IMR-90 (cell line): ENCODE measurements at regions of chr9 and their contacts with region 1.

Region 1: GRCh38 chr9:13033959-13034693 is 245.4 kb downstream of the MPDZ start:
- DNase-seq: peak; percentile 54
- ATAC-seq: peak; percentile 99
- H3K4me3 ChIP-seq: no peak overlapping the region
- H3K27ac ChIP-seq: no peak overlapping the region
- H3K4me1 ChIP-seq: no peaks in the 10 kb centered on the region
- H3K27me3 ChIP-seq: peaks cover 3% of the 10 kb centered on the region; the same call in 1 of the 2 replicates
- CTCF ChIP-seq: peak; percentile 87
- POLR2A ChIP-seq: no peak
- RAD21 ChIP-seq: peak; percentile 91

Region 2: GRCh38 chr9:12775679-12776512 is 258.2 kb before region 1 on chr9:
- CTCF ChIA-PET with region 1: no interaction called
- POLR2A ChIA-PET with region 1: no interaction called
- dilution Hi-C with region 1: no loop called
- in situ Hi-C with region 1: no loop called
- intact Hi-C with region 1: loop called (anchors 5 kb)
- DNase-seq: peak; percentile 89
- ATAC-seq: peak; percentile 84
- H3K4me3 ChIP-seq: peak overlapping the region; percentile 91
- H3K27ac ChIP-seq: peak overlapping the region; percentile 96
- H3K4me1 ChIP-seq: peaks cover 5% of the 10 kb centered on the region
- H3K27me3 ChIP-seq: no peaks in the 10 kb centered on the region
- CTCF ChIP-seq: peak; percentile 53
- POLR2A ChIP-seq: peak; percentile 45; the same call in 1 of the 2 replicates
- RAD21 ChIP-seq: peak; percentile 64; the same call in 1 of the 2 replicates

Region 3: GRCh38 chr9:13088720-13089427 is 54.7 kb after region 1 on chr9:
- CTCF ChIA-PET with region 1: interaction called, 5 read pairs
- POLR2A ChIA-PET with region 1: no interaction called
- dilution Hi-C with region 1: no loop called
- in situ Hi-C with region 1: no loop called
- intact Hi-C with region 1: loop called (anchors 2 kb)
- DNase-seq: peak; percentile 57
- ATAC-seq: peak; percentile 85
- H3K4me3 ChIP-seq: peak overlapping the region; percentile 38; the same call in 1 of the 2 replicates
- H3K27ac ChIP-seq: no peak overlapping the region
- H3K4me1 ChIP-seq: no peaks in the 10 kb centered on the region
- H3K27me3 ChIP-seq: no peaks in the 10 kb centered on the region
- CTCF ChIP-seq: peak; percentile 67
- POLR2A ChIP-seq: no peak
- RAD21 ChIP-seq: peak; percentile 66

Region 4: DNA sequence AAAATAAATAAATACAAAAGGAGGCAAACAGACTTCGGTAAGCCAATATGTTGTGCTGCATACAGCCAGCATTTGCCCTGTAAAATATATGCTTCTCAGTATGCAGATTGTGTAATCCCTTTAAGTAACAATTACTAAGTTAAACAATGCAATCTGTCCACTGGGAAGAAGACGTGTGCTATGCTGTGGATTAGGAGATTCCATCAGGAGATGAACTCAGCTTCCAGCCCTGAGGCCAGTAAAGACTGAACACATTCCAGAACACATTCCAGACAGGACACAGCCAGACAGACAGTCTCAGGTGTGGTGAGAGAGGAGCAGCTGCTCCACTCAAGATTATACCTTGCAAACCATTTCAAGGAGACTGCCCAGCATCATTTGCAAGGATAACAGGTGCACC is 147.5 kb after region 1 on chr9:
- CTCF ChIA-PET with region 1: no interaction called
- POLR2A ChIA-PET with region 1: no interaction called
- dilution Hi-C with region 1: no loop called
- in situ Hi-C with region 1: no loop called
- intact Hi-C with region 1: loop called (anchors 10 kb)
- DNase-seq: peak; percentile 38
- ATAC-seq: peak; percentile 51
- H3K4me3 ChIP-seq: no peak overlapping the region
- H3K27ac ChIP-seq: no peak overlapping the region
- H3K4me1 ChIP-seq: peaks cover 2% of the 10 kb centered on the region
- H3K27me3 ChIP-seq: no peaks in the 10 kb centered on the region
- CTCF ChIP-seq: no peak
- POLR2A ChIP-seq: no peak
- RAD21 ChIP-seq: no peak

Region 5: GRCh38 chr9:13318027-13318426 is 283.9 kb after region 1 on chr9:
- CTCF ChIA-PET with region 1: no interaction called
- POLR2A ChIA-PET with region 1: no interaction called
- dilution Hi-C with region 1: no loop called
- in situ Hi-C with region 1: no loop called
- intact Hi-C with region 1: no loop called
- DNase-seq: no peak
- ATAC-seq: no peak
- H3K4me3 ChIP-seq: no peak overlapping the region
- H3K27ac ChIP-seq: no peak overlapping the region
- H3K4me1 ChIP-seq: no peaks in the 10 kb centered on the region
- H3K27me3 ChIP-seq: no peaks in the 10 kb centered on the region; the same call in 1 of the 2 replicates
- CTCF ChIP-seq: no peak
- POLR2A ChIP-seq: no peak
- RAD21 ChIP-seq: no peak

Region 6: GRCh38 chr9:14353222-14354056 is 1319.3 kb after region 1 on chr9:
- CTCF ChIA-PET with region 1: no interaction called
- POLR2A ChIA-PET with region 1: no interaction called
- dilution Hi-C with region 1: no loop called
- in situ Hi-C with region 1: loop called (anchors 10 kb)
- intact Hi-C with region 1: loop called (anchors 10 kb)
- DNase-seq: peak; percentile 67
- ATAC-seq: peak; percentile 84
- H3K4me3 ChIP-seq: no peak overlapping the region
- H3K27ac ChIP-seq: no peak overlapping the region
- H3K4me1 ChIP-seq: no peaks in the 10 kb centered on the region; the same call in 1 of the 2 replicates
- H3K27me3 ChIP-seq: peaks cover 80% of the 10 kb centered on the region
- CTCF ChIP-seq: peak; percentile 85
- POLR2A ChIP-seq: no peak
- RAD21 ChIP-seq: peak; percentile 91

Region 7: GRCh38 chr9:14768405-14769229 is 1734.5 kb after region 1 on chr9:
- CTCF ChIA-PET with region 1: no interaction called
- POLR2A ChIA-PET with region 1: no interaction called
- dilution Hi-C with region 1: no loop called
- in situ Hi-C with region 1: no loop called
- intact Hi-C with region 1: loop called (anchors 2 kb)
- DNase-seq: peak; percentile 51
- ATAC-seq: peak; percentile 75
- H3K4me3 ChIP-seq: no peak overlapping the region
- H3K27ac ChIP-seq: no peak overlapping the region
- H3K4me1 ChIP-seq: no peaks in the 10 kb centered on the region
- H3K27me3 ChIP-seq: no peaks in the 10 kb centered on the region
- CTCF ChIP-seq: peak; percentile 72
- POLR2A ChIP-seq: no peak
- RAD21 ChIP-seq: peak; percentile 73